Activated CD8-positive, alpha-beta T cell treated with anti-CD3 and anti-CD28 coated beads for 36 hours (primary cell): ENCODE measurements at regions of chr15 and their contacts with region 1.

Region 1: GRCh38 chr15:64443747-64444621 is 16.4 kb upstream of the ZNF609 start:
- DNase-seq: peak; percentile 14
- ATAC-seq: peak; percentile 90
- H3K4me3 Mint-ChIP-seq: peak overlapping the region; percentile 68
- H3K27ac Mint-ChIP-seq: peak overlapping the region; percentile 97
- H3K4me1 Mint-ChIP-seq: peaks cover 51% of the 10 kb centered on the region
- H3K27me3 Mint-ChIP-seq: no peaks in the 10 kb centered on the region
- CTCF ChIP-seq: no peak

Region 2: GRCh38 chr15:64369078-64369607 is 74.8 kb before region 1 on chr15:
- CTCF ChIA-PET with region 1: no interaction called
- POLR2A ChIA-PET with region 1: no interaction called
- intact Hi-C with region 1: no loop called
- DNase-seq: no peak
- ATAC-seq: no peak
- H3K4me3 Mint-ChIP-seq: no peak overlapping the region
- H3K27ac Mint-ChIP-seq: no peak overlapping the region
- H3K4me1 Mint-ChIP-seq: peaks cover 5% of the 10 kb centered on the region
- H3K27me3 Mint-ChIP-seq: no peaks in the 10 kb centered on the region
- CTCF ChIP-seq: no peak

Region 3: GRCh38 chr15:64634576-64635498 is 190.9 kb after region 1 on chr15:
- CTCF ChIA-PET with region 1: no interaction called
- POLR2A ChIA-PET with region 1: no interaction called
- intact Hi-C with region 1: loop called (anchors 10 kb)
- DNase-seq: peak; percentile 77
- ATAC-seq: peak; percentile 57
- H3K4me3 Mint-ChIP-seq: peak overlapping the region; percentile 31
- H3K27ac Mint-ChIP-seq: peak overlapping the region; percentile 82
- H3K4me1 Mint-ChIP-seq: peaks cover 64% of the 10 kb centered on the region
- H3K27me3 Mint-ChIP-seq: no peaks in the 10 kb centered on the region
- CTCF ChIP-seq: no peak